A549 (cell line): ENCODE measurements at regions of chr17 and their contacts with region 1.

Region 1: DNA sequence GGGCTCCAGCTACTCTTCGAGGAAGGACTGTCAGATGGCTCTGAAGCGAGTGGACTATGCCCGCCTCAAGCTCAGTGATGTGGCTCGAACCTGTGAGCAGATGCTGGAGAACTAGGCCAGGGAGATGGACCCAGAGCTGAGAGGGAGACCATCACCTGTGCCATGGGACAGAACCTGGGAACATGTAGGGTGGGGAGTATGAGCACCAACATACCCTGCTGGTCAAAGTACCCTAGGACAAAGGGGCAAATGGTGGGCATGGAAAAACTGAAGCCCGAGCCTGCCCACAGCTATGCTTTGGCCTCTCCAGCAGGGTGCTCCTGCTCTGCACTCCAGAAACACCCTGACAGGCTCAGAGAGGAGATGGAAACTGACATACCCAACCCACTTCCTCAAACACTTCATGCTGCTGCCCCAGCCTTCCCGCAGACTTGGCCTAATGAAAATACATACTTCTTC is 1.9 kb downstream of the MED11 start:
- DNase-seq: no peak
- ATAC-seq: no peak
- H3K4me3 ChIP-seq: no peak overlapping the region
- H3K27ac ChIP-seq: no peak overlapping the region
- H3K4me1 ChIP-seq: peaks cover 17% of the 10 kb centered on the region
- CTCF ChIP-seq: no peak
- EP300 ChIP-seq: no peak
- POLR2A ChIP-seq: no peak
- RAD21 ChIP-seq: peak in 1 of 2 experiments; percentile 14; a peak in 1 of 5 replicates

Region 2: DNA sequence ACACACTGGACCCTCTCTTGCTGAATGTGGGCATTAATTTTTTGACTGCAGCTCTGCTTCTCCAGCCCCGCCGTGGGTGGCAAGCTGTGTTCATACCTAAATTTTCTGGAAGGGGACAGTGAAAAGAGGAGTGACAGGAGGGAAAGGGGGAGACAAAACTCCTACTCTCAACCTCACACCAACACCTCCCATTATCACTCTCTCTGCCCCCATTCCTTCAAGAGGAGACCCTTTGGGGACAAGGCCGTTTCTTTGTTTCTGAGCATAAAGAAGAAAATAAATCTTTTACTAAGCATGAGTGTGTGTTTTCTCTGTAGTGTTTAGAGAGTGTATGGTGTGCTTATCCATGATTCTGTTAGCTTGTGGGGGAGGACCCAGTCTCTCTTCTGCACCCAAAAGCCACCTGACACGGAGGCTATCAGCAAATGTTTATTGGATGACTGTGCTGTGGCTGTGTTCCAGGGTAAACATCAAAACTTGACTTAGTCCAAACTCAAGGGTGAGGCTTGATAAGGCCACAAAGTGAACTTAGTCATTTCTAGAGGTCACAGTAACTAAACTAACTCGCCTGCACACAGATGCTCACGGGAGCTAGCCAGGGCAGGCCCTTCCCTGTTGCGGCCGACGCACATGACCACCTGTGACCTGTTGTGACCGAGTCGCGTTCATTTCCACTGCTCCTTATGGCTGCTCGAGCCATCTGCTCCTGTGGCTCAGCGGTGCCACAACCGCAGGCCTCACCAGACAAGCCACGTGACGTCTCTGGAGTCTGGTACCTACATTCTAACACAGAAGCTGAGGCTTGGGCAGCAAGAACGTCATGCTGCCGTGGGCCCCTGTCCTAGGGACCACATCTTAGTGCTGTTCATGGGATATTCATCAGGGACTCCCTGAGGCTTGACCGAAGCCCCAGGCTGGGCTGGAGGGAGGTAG is 11.6 kb before region 1 on chr17:
- CTCF ChIA-PET with region 1: interaction called, 33 read pairs
- POLR2A ChIA-PET with region 1: interaction called, 25 read pairs
- DNase-seq: peak; percentile 85 to 95
- ATAC-seq: peak; percentile 72 to 75
- H3K4me3 ChIP-seq: peak overlapping the region; percentile 26
- H3K27ac ChIP-seq: peak overlapping the region; percentile 85 to 90
- H3K4me1 ChIP-seq: peaks cover 56% of the 10 kb centered on the region
- CTCF ChIP-seq: no peak
- EP300 ChIP-seq: peak; percentile 73 to 84; a peak in 3 of 5 replicates
- POLR2A ChIP-seq: no peak
- RAD21 ChIP-seq: peak in 1 of 2 experiments; percentile 41; a peak in 2 of 5 replicates

Region 3: GRCh38 chr17:4782652-4783051 is 49.5 kb after region 1 on chr17:
- CTCF ChIA-PET with region 1: interaction called, 115 read pairs
- POLR2A ChIA-PET with region 1: no interaction called
- DNase-seq: no peak
- ATAC-seq: peak in 1 of 2 experiments; percentile 11; a peak in 1 of 6 replicates
- H3K4me3 ChIP-seq: no peak overlapping the region
- H3K27ac ChIP-seq: no peak overlapping the region
- H3K4me1 ChIP-seq: peaks cover 13% of the 10 kb centered on the region; the same call in 2 of the 3 replicates
- CTCF ChIP-seq: no peak
- EP300 ChIP-seq: no peak
- POLR2A ChIP-seq: no peak
- RAD21 ChIP-seq: no peak

Region 4: GRCh38 chr17:4812690-4813089 is 79.6 kb after region 1 on chr17:
- CTCF ChIA-PET with region 1: no interaction called
- POLR2A ChIA-PET with region 1: no interaction called
- DNase-seq: no peak
- ATAC-seq: no peak
- H3K4me3 ChIP-seq: no peak overlapping the region
- H3K27ac ChIP-seq: no peak overlapping the region
- H3K4me1 ChIP-seq: peaks cover 7% of the 10 kb centered on the region; the same call in 2 of the 3 replicates
- CTCF ChIP-seq: no peak
- EP300 ChIP-seq: no peak
- POLR2A ChIP-seq: no peak
- RAD21 ChIP-seq: no peak

Region 5: DNA sequence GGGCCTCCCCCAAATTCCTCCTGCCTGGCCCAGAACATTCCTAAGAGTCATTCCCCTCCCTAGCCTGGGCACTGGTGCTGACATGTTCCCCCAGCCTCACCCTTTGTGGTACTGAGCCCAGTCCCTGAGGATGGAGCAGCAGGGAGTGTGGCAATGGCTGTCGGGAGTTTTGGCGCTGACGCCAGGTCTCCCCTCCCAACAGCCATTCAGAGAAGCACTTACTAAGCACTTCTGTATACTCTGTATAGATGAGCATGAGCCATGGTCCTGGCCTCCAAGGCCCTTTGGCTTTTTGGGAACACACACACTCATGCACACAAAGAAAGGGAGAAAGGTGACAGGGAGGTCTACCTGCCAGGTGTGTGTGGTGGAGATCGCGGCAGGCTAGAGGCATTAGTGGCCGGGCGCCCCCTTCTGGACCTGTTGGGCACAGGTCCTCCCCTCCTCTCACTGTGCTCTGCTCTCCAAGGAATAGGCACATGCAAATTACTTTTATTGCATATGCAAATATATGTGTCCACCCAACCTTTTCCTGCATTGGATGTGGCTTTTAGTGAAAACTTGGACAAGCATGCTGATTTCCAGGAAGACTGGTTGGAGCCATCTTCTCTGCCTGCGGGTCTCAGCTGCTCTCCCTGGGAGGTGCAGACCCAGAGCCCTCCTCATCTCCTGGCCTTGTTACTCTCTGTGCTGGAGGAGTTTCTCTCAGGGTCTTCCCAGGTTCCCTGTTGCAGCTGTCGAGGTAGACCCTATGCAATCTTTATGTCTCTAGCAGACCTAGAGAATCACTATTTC is 148.9 kb after region 1 on chr17:
- CTCF ChIA-PET with region 1: interaction called, 62 read pairs
- POLR2A ChIA-PET with region 1: interaction called, 4 read pairs
- DNase-seq: peak; percentile 70 to 71
- ATAC-seq: peak; percentile 84 to 93
- H3K4me3 ChIP-seq: no peak overlapping the region
- H3K27ac ChIP-seq: no peak overlapping the region
- H3K4me1 ChIP-seq: no peaks in the 10 kb centered on the region
- CTCF ChIP-seq: peak; percentile 95
- EP300 ChIP-seq: no peak
- POLR2A ChIP-seq: no peak
- RAD21 ChIP-seq: peak; percentile 87 to 91

Region 6: GRCh38 chr17:4891411-4892342 is 158.6 kb after region 1 on chr17:
- CTCF ChIA-PET with region 1: interaction called, 62 read pairs
- POLR2A ChIA-PET with region 1: interaction called, 4 read pairs
- DNase-seq: no peak
- ATAC-seq: no peak
- H3K4me3 ChIP-seq: no peak overlapping the region
- H3K27ac ChIP-seq: no peak overlapping the region
- H3K4me1 ChIP-seq: no peaks in the 10 kb centered on the region
- CTCF ChIP-seq: no peak
- EP300 ChIP-seq: no peak
- POLR2A ChIP-seq: no peak
- RAD21 ChIP-seq: no peak